Panc1 (cell line): ENCODE measurements at regions of chr17 and their contacts with region 1.

Region 1: DNA sequence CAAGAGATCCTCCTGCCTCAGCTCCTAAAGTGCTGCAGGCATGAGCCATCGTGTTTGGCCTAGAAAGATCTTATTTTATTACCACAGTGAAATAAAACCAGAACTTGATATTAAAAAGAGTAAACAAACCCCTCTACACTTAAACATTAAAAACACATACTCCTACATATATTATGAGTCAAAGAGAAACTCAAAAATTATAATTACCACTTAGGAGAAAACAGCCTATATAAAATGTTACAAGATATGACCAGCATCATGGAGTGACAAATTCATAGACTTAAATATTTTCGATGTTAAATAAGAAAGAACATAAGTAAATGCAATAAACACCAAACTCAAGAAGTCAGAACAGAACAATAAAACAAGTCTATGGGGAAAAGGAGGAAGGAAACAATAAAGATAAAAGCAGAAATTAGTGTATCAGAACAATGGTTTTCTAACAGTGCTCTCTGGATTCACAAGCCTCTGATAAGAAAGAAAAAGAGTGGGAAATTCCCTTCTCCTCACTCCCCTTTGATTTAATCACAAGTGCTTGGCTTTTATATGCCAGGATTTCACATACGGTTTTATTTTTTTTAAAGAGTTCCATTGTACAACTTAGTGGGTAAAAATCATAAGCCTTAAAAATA is 23.0 kb downstream of the SKAP1 start:
- DNase-seq: no peak
- ATAC-seq: no peak
- H3K4me3 ChIP-seq: no peak overlapping the region
- H3K27ac ChIP-seq: no peak overlapping the region
- H3K4me1 ChIP-seq: no peaks in the 10 kb centered on the region
- H3K27me3 ChIP-seq: no peaks in the 10 kb centered on the region
- CTCF ChIP-seq: no peak

Region 2: DNA sequence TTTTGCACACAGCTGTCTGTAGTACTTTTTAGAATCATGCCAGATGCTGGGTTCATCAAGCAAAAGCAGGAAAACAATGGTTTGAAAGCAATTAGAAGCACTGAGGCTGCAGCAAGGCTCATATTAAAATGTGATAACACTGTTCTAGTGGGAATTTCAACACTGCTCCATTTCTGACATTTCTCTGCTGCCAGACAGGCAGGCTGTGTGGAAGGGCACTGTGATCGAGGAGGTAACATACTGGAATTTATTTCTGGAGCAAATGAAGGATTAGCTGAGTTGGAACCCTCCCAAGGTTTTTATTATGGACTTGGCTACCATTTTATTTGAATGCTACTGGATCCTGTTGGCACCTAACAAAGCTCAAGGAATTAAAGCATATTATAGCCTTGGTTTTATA is 43.9 kb before region 1 on chr17:
- CTCF ChIA-PET with region 1: interaction called, 11 read pairs
- POLR2A ChIA-PET with region 1: no interaction called
- in situ Hi-C with region 1: no loop called
- intact Hi-C with region 1: no loop called
- DNase-seq: no peak
- ATAC-seq: no peak
- H3K4me3 ChIP-seq: no peak overlapping the region
- H3K27ac ChIP-seq: no peak overlapping the region
- H3K4me1 ChIP-seq: no peaks in the 10 kb centered on the region; the same call in 1 of the 2 replicates
- H3K27me3 ChIP-seq: no peaks in the 10 kb centered on the region; the same call in 1 of the 2 replicates
- CTCF ChIP-seq: no peak

Region 3: GRCh38 chr17:48441231-48441711 is 34.2 kb after region 1 on chr17:
- CTCF ChIA-PET with region 1: interaction called, 10 read pairs
- POLR2A ChIA-PET with region 1: no interaction called
- in situ Hi-C with region 1: no loop called
- intact Hi-C with region 1: no loop called
- DNase-seq: no peak
- ATAC-seq: no peak
- H3K4me3 ChIP-seq: no peak overlapping the region
- H3K27ac ChIP-seq: no peak overlapping the region
- H3K4me1 ChIP-seq: no peaks in the 10 kb centered on the region
- H3K27me3 ChIP-seq: no peaks in the 10 kb centered on the region
- CTCF ChIP-seq: no peak

Region 4: GRCh38 chr17:48561884-48562810 is 155.1 kb after region 1 on chr17:
- CTCF ChIA-PET with region 1: no interaction called
- POLR2A ChIA-PET with region 1: no interaction called
- in situ Hi-C with region 1: no loop called
- intact Hi-C with region 1: no loop called
- DNase-seq: no peak
- ATAC-seq: peak; percentile 40
- H3K4me3 ChIP-seq: peak overlapping the region; percentile 0 to 36; a peak in 1 of 4 replicates
- H3K27ac ChIP-seq: peak overlapping the region; percentile 97
- H3K4me1 ChIP-seq: peaks cover 95% of the 10 kb centered on the region
- H3K27me3 ChIP-seq: no peaks in the 10 kb centered on the region
- CTCF ChIP-seq: peak; percentile 66; the same call in 1 of the 2 replicates